ENCODE measurements at regions of chr18 and their contacts with region 1.

Region 1: GRCh38 chr18:35231052-35231451 is 9.8 kb upstream of the ZNF397 start:
- DNase-seq: peak; percentile 49 to 80 (median 73)
- ATAC-seq: peak; percentile 97
- H3K4me3 ChIP-seq: no peak overlapping the region
- H3K4me3 Mint-ChIP-seq: peak overlapping the region in 9 of 10 donors; percentile 1 to 71 (median 53)
- H3K27ac ChIP-seq: no peak overlapping the region
- H3K27ac Mint-ChIP-seq: peak overlapping the region in 1 of 9 donors; percentile 37
- H3K4me1 ChIP-seq: no peaks in the 10 kb centered on the region
- H3K4me1 Mint-ChIP-seq: peaks cover 3 to 5% (median 4%) of the 10 kb centered on the region in 7 donors
- H3K27me3 ChIP-seq: no peaks in the 10 kb centered on the region
- H3K27me3 Mint-ChIP-seq: no peaks in the 10 kb centered on the region

Region 2: GRCh38 chr18:34867520-34867919 is 363.5 kb before region 1 on chr18:
- CTCF ChIA-PET with region 1: no interaction called
- POLR2A ChIA-PET with region 1: no interaction called
- intact Hi-C with region 1: loop called in 1 of 2 experiments (anchors 5 kb)
- DNase-seq: no peak
- ATAC-seq: no peak
- H3K4me3 ChIP-seq: no peak overlapping the region
- H3K4me3 Mint-ChIP-seq: no peak overlapping the region
- H3K27ac ChIP-seq: no peak overlapping the region
- H3K27ac Mint-ChIP-seq: no peak overlapping the region
- H3K4me1 ChIP-seq: no peaks in the 10 kb centered on the region
- H3K4me1 Mint-ChIP-seq: peaks cover 0 to 24% (median 9%) of the 10 kb centered on the region in 7 donors
- H3K27me3 ChIP-seq: no peaks in the 10 kb centered on the region
- H3K27me3 Mint-ChIP-seq: peaks cover 0 to 10% (median 0%) of the 10 kb centered on the region in 5 donors

Region 3: GRCh38 chr18:35267161-35267651 is 36.2 kb after region 1 on chr18:
- CTCF ChIA-PET with region 1: no interaction called
- POLR2A ChIA-PET with region 1: no interaction called
- intact Hi-C with region 1: loop called in 1 of 2 experiments (anchors 5 kb)
- DNase-seq: peak; percentile 37 to 62 (median 54)
- ATAC-seq: peak; percentile 90
- H3K4me3 ChIP-seq: peak overlapping the region; percentile 78
- H3K4me3 Mint-ChIP-seq: peak overlapping the region; percentile 85 to 99 (median 97)
- H3K27ac ChIP-seq: peak overlapping the region; percentile 74
- H3K27ac Mint-ChIP-seq: peak overlapping the region; percentile 83 to 98 (median 97)
- H3K4me1 ChIP-seq: peaks cover 0 to 7% of the 10 kb centered on the region in 2 donors
- H3K4me1 Mint-ChIP-seq: peaks cover 13 to 35% (median 26%) of the 10 kb centered on the region in 7 donors
- H3K27me3 ChIP-seq: no peaks in the 10 kb centered on the region
- H3K27me3 Mint-ChIP-seq: no peaks in the 10 kb centered on the region

Region 4: DNA sequence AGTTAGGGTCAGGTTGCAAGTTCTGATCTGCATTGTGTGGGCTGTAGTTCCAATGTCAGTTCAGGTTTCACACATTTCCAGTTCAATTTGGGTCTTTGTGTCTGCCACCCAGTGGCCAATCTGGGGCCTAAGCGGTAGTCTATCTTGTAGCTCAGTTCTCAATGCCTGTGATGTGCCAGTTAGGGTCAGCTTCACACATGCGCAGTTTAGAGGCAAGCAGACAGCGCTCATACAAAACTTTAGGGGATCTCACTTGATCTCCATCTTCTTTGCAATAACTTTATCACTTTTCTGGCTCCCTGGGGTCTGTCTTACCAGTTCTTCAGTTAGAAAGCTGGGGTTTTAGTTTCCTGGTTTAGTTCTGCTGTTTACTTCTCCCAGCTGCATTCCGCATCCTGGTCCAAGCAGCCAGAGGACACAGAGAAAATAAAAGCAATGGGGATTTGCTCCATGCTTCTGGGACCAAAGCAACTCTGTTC is 124.1 kb after region 1 on chr18:
- CTCF ChIA-PET with region 1: interaction called, 6 read pairs
- POLR2A ChIA-PET with region 1: interaction called, 3 read pairs
- intact Hi-C with region 1: loop called (anchors 1 kb)
- DNase-seq: peak; percentile 16 to 67 (median 49)
- ATAC-seq: peak; percentile 98
- H3K4me3 ChIP-seq: no peak overlapping the region
- H3K4me3 Mint-ChIP-seq: no peak overlapping the region
- H3K27ac ChIP-seq: no peak overlapping the region
- H3K27ac Mint-ChIP-seq: peak overlapping the region in 1 of 9 donors; percentile 21
- H3K4me1 ChIP-seq: no peaks in the 10 kb centered on the region
- H3K4me1 Mint-ChIP-seq: peaks cover 0 to 7% (median 0%) of the 10 kb centered on the region in 7 donors
- H3K27me3 ChIP-seq: no peaks in the 10 kb centered on the region
- H3K27me3 Mint-ChIP-seq: peaks cover 0 to under 1% (median 0%) of the 10 kb centered on the region in 5 donors

Region 5: DNA sequence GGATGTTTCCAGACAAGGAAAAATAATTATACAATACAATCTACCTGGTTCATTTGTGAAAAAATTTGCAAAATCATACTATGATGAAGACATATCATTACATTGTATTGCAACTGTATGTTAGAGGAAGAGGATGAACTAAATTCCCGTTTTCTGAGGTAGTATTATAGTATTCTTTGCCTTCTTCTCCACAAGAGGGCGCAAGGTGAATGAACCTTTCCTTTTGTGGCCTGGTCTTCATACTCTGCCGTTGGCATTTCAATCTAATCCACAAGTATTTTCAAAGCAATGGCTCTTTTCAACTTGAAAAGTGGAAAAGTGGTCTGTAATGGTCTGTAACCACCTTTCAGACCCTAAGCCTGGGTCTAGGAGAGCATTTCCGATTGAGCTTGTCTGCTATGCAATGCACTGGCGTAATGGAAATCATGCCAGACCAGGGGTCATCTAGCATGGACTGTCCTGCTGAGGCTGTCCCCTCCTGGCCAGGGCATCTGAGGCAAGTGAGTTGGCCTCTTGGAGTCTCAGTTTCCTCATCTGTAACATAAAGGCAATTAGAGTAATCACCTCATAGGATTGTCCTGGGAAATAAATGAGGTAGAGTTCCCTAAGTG is 176.9 kb after region 1 on chr18:
- CTCF ChIA-PET with region 1: no interaction called
- POLR2A ChIA-PET with region 1: no interaction called
- intact Hi-C with region 1: loop called (anchors 1 kb)
- DNase-seq: peak in 7 of 9 donors; percentile 14 to 70 (median 60)
- ATAC-seq: peak; percentile 90
- H3K4me3 ChIP-seq: no peak overlapping the region
- H3K4me3 Mint-ChIP-seq: no peak overlapping the region
- H3K27ac ChIP-seq: no peak overlapping the region
- H3K27ac Mint-ChIP-seq: no peak overlapping the region
- H3K4me1 ChIP-seq: peaks cover 0 to 4% of the 10 kb centered on the region in 2 donors
- H3K4me1 Mint-ChIP-seq: peaks cover 10 to 35% (median 17%) of the 10 kb centered on the region in 7 donors
- H3K27me3 ChIP-seq: no peaks in the 10 kb centered on the region
- H3K27me3 Mint-ChIP-seq: peaks cover 0 to 15% (median 7%) of the 10 kb centered on the region in 5 donors

Region 6: DNA sequence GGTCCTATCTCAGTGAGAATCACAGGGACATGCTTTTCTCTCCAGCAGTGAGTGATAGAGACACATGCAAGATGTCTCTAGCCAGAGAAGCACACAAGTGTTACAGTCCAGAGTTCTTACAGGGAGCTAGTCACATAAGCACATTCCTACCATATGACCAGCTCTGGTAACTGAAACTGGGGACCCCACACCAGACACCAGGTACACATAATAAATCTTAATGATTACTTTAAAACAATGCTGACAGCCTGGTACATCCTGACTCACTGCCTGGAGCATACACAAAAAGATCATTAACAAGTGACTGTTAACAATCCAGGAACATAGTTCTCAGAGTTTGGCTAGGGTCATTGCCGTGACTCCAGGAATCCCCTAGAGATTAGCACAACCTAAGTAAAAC is 404.1 kb after region 1 on chr18:
- CTCF ChIA-PET with region 1: no interaction called
- POLR2A ChIA-PET with region 1: no interaction called
- intact Hi-C with region 1: no loop called
- DNase-seq: no peak
- ATAC-seq: no peak
- H3K4me3 ChIP-seq: no peak overlapping the region
- H3K4me3 Mint-ChIP-seq: no peak overlapping the region
- H3K27ac ChIP-seq: no peak overlapping the region
- H3K27ac Mint-ChIP-seq: no peak overlapping the region
- H3K4me1 ChIP-seq: no peaks in the 10 kb centered on the region
- H3K4me1 Mint-ChIP-seq: peaks cover 0 to 5% (median 0%) of the 10 kb centered on the region in 7 donors
- H3K27me3 ChIP-seq: no peaks in the 10 kb centered on the region
- H3K27me3 Mint-ChIP-seq: no peaks in the 10 kb centered on the region

Region 7: DNA sequence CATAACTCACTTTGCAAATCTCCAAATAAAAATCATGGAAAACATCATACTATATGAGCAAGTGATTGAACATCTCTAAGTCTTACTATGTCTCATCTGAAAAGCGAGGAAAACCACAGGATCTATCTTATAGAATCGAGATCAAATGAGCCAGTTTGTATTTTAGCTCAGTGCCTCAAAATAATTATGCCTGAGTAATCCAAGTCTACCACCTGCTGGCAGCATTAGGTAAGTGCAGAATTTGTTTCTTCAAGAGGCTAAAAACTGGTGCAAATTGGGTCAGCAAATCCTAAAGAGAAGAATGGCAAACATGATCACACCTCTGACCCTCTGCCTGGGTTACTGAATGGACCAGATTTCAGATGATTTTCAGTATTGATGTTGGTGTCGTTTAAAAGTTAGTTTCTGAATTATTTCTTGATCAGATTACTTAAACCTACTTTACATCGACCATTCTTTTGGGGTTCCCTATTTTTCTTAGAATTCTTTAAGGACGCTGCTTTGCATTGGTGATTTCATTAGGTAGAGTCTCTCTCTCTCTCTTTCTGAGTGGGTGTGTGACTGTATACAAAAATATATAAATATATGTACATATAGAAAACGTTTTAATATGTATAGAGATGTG is 1053.7 kb after region 1 on chr18:
- CTCF ChIA-PET with region 1: no interaction called
- POLR2A ChIA-PET with region 1: no interaction called
- intact Hi-C with region 1: loop called in 1 of 2 experiments (anchors 5 kb)
- DNase-seq: peak in 7 of 9 donors; percentile 20 to 61 (median 54)
- ATAC-seq: peak; percentile 67
- H3K4me3 ChIP-seq: no peak overlapping the region
- H3K4me3 Mint-ChIP-seq: no peak overlapping the region
- H3K27ac ChIP-seq: no peak overlapping the region
- H3K27ac Mint-ChIP-seq: no peak overlapping the region
- H3K4me1 ChIP-seq: no peaks in the 10 kb centered on the region
- H3K4me1 Mint-ChIP-seq: peaks cover 0 to 4% (median 0%) of the 10 kb centered on the region in 7 donors
- H3K27me3 ChIP-seq: no peaks in the 10 kb centered on the region
- H3K27me3 Mint-ChIP-seq: peaks cover 30 to 59% (median 33%) of the 10 kb centered on the region in 5 donors